PC-3 (cell line): ENCODE measurements at regions of chr7 and their contacts with region 1.

Region 1: GRCh38 chr7:13850185-13850752 is 139.2 kb downstream of the ETV1 start:
- DNase-seq: peak; percentile 97
- ATAC-seq: peak; percentile 90
- H3K4me3 ChIP-seq: no peak overlapping the region
- H3K27ac ChIP-seq: peak overlapping the region; percentile 95
- H3K4me1 ChIP-seq: peaks cover 49% of the 10 kb centered on the region
- H3K27me3 ChIP-seq: no peaks in the 10 kb centered on the region
- CTCF ChIP-seq: no peak

Region 2: GRCh38 chr7:13524076-13524475 is 326.2 kb before region 1 on chr7:
- CTCF ChIA-PET with region 1: no interaction called
- POLR2A ChIA-PET with region 1: no interaction called
- intact Hi-C with region 1: loop called (anchors 10 kb)
- DNase-seq: no peak
- ATAC-seq: peak; percentile 60; the same call in 1 of the 2 replicates
- H3K4me3 ChIP-seq: no peak overlapping the region
- H3K27ac ChIP-seq: no peak overlapping the region
- H3K4me1 ChIP-seq: peaks cover 4% of the 10 kb centered on the region; the same call in 1 of the 2 replicates
- H3K27me3 ChIP-seq: no peaks in the 10 kb centered on the region
- CTCF ChIP-seq: no peak

Region 3: DNA sequence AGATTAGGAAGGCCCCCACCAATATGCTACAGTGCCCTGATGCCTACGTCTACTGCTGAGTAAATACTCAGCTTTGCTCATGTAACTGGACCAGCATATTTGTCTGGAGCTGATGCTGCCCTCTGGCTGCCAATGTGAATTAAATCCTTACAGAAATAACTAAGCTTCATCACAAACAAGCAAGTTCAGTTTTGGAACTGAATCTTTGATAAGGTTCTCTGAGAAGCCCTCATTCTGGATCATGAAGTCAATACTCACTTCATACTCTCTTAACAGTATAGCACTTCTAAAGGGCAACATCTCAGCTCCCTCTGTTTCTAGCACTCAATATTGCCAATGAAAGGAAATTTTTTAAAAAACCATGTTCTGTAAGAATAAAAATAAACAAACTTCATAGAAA is 107.5 kb before region 1 on chr7:
- CTCF ChIA-PET with region 1: interaction called, 5 read pairs
- POLR2A ChIA-PET with region 1: no interaction called
- intact Hi-C with region 1: loop called (anchors 1 kb)
- DNase-seq: peak; percentile 69
- ATAC-seq: peak; percentile 73
- H3K4me3 ChIP-seq: no peak overlapping the region
- H3K27ac ChIP-seq: peak overlapping the region; percentile 56
- H3K4me1 ChIP-seq: peaks cover 24% of the 10 kb centered on the region
- H3K27me3 ChIP-seq: no peaks in the 10 kb centered on the region
- CTCF ChIP-seq: peak; percentile 78

Region 4: GRCh38 chr7:13790611-13791010 is 59.7 kb before region 1 on chr7:
- CTCF ChIA-PET with region 1: no interaction called
- POLR2A ChIA-PET with region 1: no interaction called
- intact Hi-C with region 1: no loop called
- DNase-seq: no peak
- ATAC-seq: no peak
- H3K4me3 ChIP-seq: no peak overlapping the region
- H3K27ac ChIP-seq: no peak overlapping the region
- H3K4me1 ChIP-seq: no peaks in the 10 kb centered on the region
- H3K27me3 ChIP-seq: no peaks in the 10 kb centered on the region
- CTCF ChIP-seq: no peak

Region 5: GRCh38 chr7:13822678-13823077 is 27.6 kb before region 1 on chr7:
- CTCF ChIA-PET with region 1: no interaction called
- POLR2A ChIA-PET with region 1: no interaction called
- intact Hi-C with region 1: loop called (anchors 2 kb)
- DNase-seq: peak; percentile 78
- ATAC-seq: peak; percentile 78
- H3K4me3 ChIP-seq: no peak overlapping the region
- H3K27ac ChIP-seq: peak overlapping the region; percentile 98
- H3K4me1 ChIP-seq: peaks cover 44% of the 10 kb centered on the region
- H3K27me3 ChIP-seq: no peaks in the 10 kb centered on the region
- CTCF ChIP-seq: no peak

Region 6: GRCh38 chr7:13920053-13920697 is 69.9 kb after region 1 on chr7:
- CTCF ChIA-PET with region 1: no interaction called
- POLR2A ChIA-PET with region 1: interaction called, 6 read pairs
- intact Hi-C with region 1: loop called (anchors 1 kb)
- DNase-seq: peak; percentile 97
- ATAC-seq: peak; percentile 99
- H3K4me3 ChIP-seq: peak overlapping the region; percentile 57
- H3K27ac ChIP-seq: peak overlapping the region; percentile 93
- H3K4me1 ChIP-seq: peaks cover 21% of the 10 kb centered on the region
- H3K27me3 ChIP-seq: no peaks in the 10 kb centered on the region
- CTCF ChIP-seq: no peak